ENCODE measurements at regions of chr5 and their contacts with region 1.

Region 1: DNA sequence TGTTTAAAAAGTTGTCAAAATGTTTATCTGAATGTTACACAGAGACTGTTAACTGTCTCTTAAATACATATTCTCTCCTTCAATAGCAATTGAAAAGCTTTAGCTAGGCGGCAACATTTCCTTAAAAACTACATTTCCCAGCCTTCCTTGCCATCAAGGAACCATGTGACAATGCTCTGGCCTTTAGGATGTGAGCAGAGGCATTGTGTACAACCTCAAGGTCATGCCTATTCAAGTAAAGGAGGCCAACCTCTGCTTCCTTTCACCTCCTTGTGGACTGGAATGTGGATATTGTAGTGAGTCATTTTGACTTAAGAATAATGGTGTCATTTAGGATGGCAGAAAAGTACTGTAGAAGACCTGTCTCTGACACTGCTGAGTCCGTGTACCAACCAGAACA is 23.7 kb upstream of the MROH2B start:
- DNase-seq: no peak
- H3K4me3 ChIP-seq: no peak overlapping the region
- H3K27ac ChIP-seq: no peak overlapping the region
- H3K4me1 ChIP-seq: no peaks in the 10 kb centered on the region
- H3K27me3 ChIP-seq: no peaks in the 10 kb centered on the region
- CTCF ChIP-seq: no peak
- POLR2A ChIP-seq: no peak

Region 2: GRCh38 chr5:39256477-39257235 is 1838.2 kb before region 1 on chr5:
- intact Hi-C with region 1: loop called (anchors 5 kb)
- DNase-seq: no peak
- H3K4me3 ChIP-seq: peak overlapping the region in 1 of 3 donors; percentile 23
- H3K27ac ChIP-seq: no peak overlapping the region
- H3K4me1 ChIP-seq: no peaks in the 10 kb centered on the region
- H3K27me3 ChIP-seq: no peaks in the 10 kb centered on the region
- CTCF ChIP-seq: no peak
- POLR2A ChIP-seq: no peak

Measured in breast epithelium (tissue), 4 donors.